Motor neuron (in vitro differentiated cells): ENCODE measurements at regions of chr22 and their contacts with region 1.

Region 1: GRCh38 chr22:43592476-43592875 is 180.7 kb downstream of the MPPED1 start:
- ATAC-seq: peak in 1 of 8 experiments; percentile 62
- H3K4me3 ChIP-seq: no peak overlapping the region
- H3K27ac ChIP-seq: no peak overlapping the region
- H3K4me1 ChIP-seq: peaks cover 0 to 5% of the 10 kb centered on the region in 2 donors

Region 2: DNA sequence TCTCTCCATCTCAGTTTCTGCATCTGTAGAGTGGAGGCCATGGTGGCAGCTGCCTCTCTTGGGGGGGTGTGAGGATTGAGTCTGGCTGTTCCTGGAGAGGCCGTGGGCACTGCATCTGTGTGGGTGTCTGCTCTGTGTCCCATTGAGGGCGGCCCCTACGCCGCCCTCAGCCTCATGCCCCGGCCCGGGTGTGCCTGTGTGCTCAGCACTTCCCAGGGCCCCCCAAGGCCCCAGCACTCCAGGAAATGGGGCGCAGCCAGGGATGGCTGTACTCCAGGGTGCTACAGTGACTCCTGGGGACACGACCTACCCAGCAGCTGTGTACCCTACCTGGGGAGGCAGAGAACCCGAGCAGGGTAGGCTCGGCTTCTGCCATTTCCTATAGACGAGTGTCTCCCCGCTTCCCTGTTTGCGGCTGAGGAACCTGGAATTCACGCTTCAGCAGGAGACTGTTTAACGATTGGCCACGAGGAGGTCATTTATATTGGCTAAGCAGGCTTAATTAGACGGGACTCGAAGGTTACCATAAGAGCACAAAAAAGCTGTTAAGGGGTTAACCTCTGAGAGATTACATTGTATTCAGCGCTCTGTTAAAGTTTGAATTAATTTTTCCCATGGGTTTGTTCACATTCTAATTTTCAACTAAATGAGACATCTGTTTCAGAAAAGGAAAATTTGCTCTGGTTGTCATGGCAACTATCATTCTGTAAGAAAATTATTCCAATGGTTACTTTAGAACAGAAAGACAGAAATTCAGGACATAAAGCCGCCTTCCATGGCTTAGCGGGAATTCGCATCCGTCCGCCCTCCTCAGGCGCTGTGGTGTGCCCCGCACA is 104.2 kb before region 1 on chr22:
- in situ Hi-C with region 1: no loop called
- ATAC-seq: peak in 4 of 8 experiments; percentile 26 to 44 (median 37)
- H3K4me3 ChIP-seq: no peak overlapping the region
- H3K27ac ChIP-seq: no peak overlapping the region
- H3K4me1 ChIP-seq: peaks cover 20 to 27% of the 10 kb centered on the region in 2 donors

Region 3: GRCh38 chr22:43689356-43689755 is 96.9 kb after region 1 on chr22:
- in situ Hi-C with region 1: loop called in 1 of 9 experiments (anchors 25 kb)
- ATAC-seq: no peak
- H3K4me3 ChIP-seq: no peak overlapping the region
- H3K27ac ChIP-seq: no peak overlapping the region
- H3K4me1 ChIP-seq: no peaks in the 10 kb centered on the region